SK-N-SH (cell line): ENCODE measurements at regions of chr17 and their contacts with region 1.

Region 1: DNA sequence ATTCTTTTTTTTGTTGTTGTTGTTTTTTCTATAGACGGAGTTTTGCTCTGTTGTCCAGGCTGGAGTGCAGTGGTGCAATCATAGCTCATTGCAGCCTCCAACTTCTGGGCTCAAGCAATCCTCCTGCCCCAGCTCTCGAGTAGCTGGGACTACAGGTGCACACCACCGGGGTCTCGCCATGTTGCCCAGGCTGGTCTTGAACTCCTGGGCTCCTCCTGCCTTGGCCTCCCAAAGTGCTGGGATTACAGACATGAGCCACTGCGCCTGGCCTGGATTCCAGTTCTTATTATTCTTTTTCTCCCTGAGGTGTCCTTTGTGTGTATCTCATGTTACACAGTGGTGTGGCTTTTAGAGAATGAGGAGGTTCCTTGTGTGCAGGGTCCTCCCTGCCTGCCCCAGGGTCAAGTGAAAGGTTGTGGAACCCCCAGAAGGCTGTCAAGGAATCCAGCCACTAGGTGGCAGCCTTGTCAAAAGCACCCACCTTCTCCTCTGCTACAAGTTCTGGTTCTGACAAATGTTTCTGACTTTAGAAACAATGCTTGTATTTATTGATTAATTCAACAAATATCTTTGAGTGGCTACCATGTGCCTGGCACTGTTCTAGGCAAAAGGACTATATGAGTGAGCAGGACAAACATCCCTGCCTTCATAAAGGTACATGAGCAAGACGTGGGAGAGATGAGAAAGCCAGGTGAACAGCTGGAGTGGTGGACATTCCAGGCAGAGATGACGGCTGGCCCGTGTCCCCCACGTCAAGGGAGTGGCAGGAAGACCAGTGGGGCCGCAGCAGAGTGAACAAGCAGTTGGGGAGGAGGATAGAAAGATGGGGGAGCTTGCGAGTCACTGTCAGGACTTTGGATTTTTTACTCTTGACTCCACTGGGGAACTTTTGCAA is 112.4 kb downstream of the SPECC1 start:
- DNase-seq: peak; percentile 76
- H3K4me3 ChIP-seq: no peak overlapping the region; a peak in 1 of 4 replicates
- H3K27ac ChIP-seq: no peak overlapping the region; a peak in 1 of 4 replicates
- H3K4me1 ChIP-seq: peaks cover 0 to 5% of the 10 kb centered on the region in 2 experiments; a peak in 1 of 4 replicates
- H3K27me3 ChIP-seq: no peaks in the 10 kb centered on the region
- CTCF ChIP-seq: peak; percentile 97
- EP300 ChIP-seq: no peak
- RAD21 ChIP-seq: peak; percentile 95

Region 2: DNA sequence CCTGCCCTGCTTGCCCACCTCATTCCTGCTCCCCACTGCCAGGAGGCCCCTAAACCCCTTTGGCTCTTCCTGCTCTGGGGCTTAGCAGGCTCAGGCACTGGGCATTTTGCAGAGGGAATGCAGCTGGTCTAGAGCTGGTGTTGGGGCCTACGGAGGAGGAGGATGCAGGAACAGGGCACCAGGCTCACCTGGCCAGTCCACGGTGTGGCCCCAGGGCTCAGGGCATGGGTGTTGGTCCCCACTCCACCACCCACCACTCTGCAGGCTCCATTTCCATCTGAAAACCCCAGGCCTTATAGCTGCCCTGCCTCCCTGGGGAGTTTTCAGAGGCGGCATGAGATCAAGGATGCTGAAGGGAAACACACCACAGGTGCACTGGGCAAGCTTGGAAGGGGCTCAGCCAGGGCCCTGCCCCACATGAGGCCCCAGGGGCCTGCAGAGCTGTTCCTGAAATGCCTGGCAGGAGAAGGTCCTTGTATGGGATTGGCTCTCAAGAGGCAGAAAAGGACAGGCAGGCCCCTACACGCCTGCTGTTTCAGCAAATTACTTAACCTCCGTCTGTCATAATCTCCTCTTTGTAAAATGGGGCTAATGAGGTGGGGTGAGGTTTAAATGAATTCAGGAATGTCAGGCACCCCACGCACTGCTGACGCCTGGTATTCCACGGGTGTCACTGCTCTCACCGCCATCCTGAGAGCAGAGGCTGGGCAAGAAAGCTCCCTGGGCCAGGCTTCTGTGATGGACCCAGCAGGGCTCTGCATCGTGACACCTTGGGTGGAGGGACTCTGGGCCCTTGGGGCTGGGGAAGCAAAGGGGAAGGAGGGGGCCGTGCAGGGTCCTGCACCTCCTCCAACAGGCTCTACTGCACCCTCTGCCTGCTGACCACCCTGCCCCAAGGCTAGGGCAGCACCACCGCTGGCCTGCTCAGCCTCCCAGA is 414.5 kb before region 1 on chr17:
- CTCF ChIA-PET with region 1: no interaction called
- POLR2A ChIA-PET with region 1: no interaction called
- DNase-seq: no peak
- H3K4me3 ChIP-seq: no peak overlapping the region
- H3K27ac ChIP-seq: no peak overlapping the region
- H3K4me1 ChIP-seq: peaks cover 8 to 16% of the 10 kb centered on the region in 2 experiments; a peak in 1 of 4 replicates
- H3K27me3 ChIP-seq: no peaks in the 10 kb centered on the region
- CTCF ChIP-seq: no peak
- EP300 ChIP-seq: no peak
- RAD21 ChIP-seq: no peak

Region 3: DNA sequence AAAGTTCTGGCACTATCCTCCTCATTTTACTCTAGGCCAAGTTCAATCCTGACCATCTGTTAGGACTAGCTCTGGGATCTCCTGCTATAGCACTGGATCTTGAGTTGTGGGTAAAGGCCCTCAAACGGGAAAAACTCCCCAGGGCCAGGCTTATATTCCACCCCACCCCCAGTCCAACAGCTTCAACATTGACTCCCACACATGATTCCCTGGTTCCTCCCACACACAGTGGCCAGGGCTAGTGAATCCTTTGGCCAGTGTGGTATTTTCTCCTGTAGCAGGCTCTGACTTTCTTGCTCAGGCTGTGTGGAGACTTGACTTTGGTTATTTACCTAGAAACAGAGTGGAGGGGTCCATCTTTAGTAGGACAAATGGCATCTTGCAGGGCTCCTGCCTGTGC is 133.7 kb before region 1 on chr17:
- CTCF ChIA-PET with region 1: interaction called, 67 read pairs
- POLR2A ChIA-PET with region 1: no interaction called
- DNase-seq: no peak
- H3K4me3 ChIP-seq: no peak overlapping the region
- H3K27ac ChIP-seq: no peak overlapping the region
- H3K4me1 ChIP-seq: no peaks in the 10 kb centered on the region
- H3K27me3 ChIP-seq: no peaks in the 10 kb centered on the region
- CTCF ChIP-seq: no peak
- EP300 ChIP-seq: no peak
- RAD21 ChIP-seq: no peak

Region 4: GRCh38 chr17:19992803-19993713 is 128.5 kb before region 1 on chr17:
- CTCF ChIA-PET with region 1: interaction called, 67 read pairs
- POLR2A ChIA-PET with region 1: no interaction called
- DNase-seq: peak; percentile 80
- H3K4me3 ChIP-seq: peak overlapping the region; percentile 9 to 40; a peak in 1 of 4 replicates
- H3K27ac ChIP-seq: no peak overlapping the region
- H3K4me1 ChIP-seq: no peaks in the 10 kb centered on the region
- H3K27me3 ChIP-seq: no peaks in the 10 kb centered on the region
- CTCF ChIP-seq: peak; percentile 72
- EP300 ChIP-seq: no peak
- RAD21 ChIP-seq: peak; percentile 93

Region 5: GRCh38 chr17:20141198-20141972 is 19.8 kb after region 1 on chr17:
- CTCF ChIA-PET with region 1: interaction called, 10 read pairs
- POLR2A ChIA-PET with region 1: no interaction called
- DNase-seq: no peak
- H3K4me3 ChIP-seq: no peak overlapping the region
- H3K27ac ChIP-seq: no peak overlapping the region
- H3K4me1 ChIP-seq: no peaks in the 10 kb centered on the region; a peak in 1 of 4 replicates
- H3K27me3 ChIP-seq: no peaks in the 10 kb centered on the region
- CTCF ChIP-seq: no peak
- EP300 ChIP-seq: no peak
- RAD21 ChIP-seq: no peak

Region 6: DNA sequence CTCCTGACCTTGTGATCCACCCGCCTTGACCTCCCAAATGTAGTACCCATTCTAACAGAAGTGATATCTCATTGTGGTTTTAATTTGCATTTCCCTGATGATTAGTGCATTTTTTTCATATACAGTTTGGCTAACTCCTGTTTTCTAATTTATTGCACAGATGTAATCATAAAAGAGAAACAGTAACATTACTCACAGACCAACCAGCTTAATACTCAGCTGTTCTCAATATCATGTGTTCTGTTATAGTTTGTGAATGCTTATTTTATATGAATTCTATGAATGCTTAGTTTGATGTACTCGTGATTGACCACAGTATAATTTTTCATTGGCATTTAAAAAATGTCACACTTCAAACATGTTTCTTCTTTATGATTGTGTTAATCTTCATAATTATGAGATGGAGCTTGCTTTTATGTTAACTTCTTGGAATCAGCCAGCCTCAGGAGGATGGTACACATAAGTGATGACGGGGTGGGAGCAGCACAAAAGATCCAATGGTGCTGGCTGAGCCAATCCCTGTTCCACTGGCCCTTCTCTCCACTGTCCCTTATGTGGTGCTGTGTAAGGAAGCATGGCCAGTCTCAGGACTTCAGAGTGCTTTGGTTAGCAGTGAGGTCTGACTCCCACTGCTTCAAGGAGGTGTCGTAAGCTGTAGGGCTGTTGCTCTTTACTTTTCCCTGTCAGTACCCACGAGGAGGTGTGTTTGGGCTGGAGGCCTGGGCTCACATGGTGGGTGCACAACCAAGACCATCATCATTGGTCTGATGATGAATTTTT is 78.6 kb after region 1 on chr17:
- CTCF ChIA-PET with region 1: no interaction called
- POLR2A ChIA-PET with region 1: no interaction called
- DNase-seq: no peak
- H3K4me3 ChIP-seq: no peak overlapping the region
- H3K27ac ChIP-seq: no peak overlapping the region
- H3K4me1 ChIP-seq: no peaks in the 10 kb centered on the region
- H3K27me3 ChIP-seq: no peaks in the 10 kb centered on the region
- CTCF ChIP-seq: no peak
- EP300 ChIP-seq: no peak
- RAD21 ChIP-seq: no peak

Region 7: DNA sequence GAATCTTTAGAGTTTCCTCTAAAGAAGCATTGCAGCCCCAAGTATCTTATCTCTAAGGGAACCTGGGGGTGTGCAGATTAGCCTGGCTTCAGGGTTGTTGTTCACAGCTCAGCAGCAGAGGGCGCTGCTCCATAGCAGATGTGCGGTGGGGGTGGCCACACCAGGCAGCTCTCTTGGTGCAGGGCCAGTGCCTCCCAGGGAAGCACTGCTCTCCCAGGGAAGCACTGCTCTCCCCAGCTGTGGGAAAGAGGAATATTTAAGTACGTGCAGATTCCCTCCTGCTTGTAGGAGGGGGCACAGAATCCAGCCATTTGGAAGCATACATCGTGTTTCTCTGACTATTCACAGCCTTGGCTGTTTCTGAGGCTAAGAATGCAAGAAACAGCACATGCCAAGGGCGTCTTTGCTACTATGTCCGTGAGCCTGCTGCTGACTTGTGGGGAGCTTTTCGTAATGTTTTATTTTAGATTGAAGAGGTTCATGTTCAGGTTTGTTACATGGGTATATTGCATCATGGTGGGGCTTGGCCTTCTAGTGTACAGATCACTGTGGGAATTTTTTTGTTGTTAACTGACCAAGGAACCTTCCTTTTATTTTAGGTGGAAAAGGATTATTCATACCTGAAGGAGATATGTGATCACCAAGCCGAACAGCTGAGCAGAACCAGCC is 105.3 kb after region 1 on chr17:
- CTCF ChIA-PET with region 1: interaction called, 59 read pairs
- POLR2A ChIA-PET with region 1: no interaction called
- DNase-seq: peak; percentile 85
- H3K4me3 ChIP-seq: no peak overlapping the region; a peak in 1 of 4 replicates
- H3K27ac ChIP-seq: no peak overlapping the region
- H3K4me1 ChIP-seq: peaks cover 0 to 3% of the 10 kb centered on the region in 2 experiments; a peak in 1 of 4 replicates
- H3K27me3 ChIP-seq: no peaks in the 10 kb centered on the region
- CTCF ChIP-seq: peak; percentile 88
- EP300 ChIP-seq: no peak
- RAD21 ChIP-seq: peak; percentile 98

Region 8: DNA sequence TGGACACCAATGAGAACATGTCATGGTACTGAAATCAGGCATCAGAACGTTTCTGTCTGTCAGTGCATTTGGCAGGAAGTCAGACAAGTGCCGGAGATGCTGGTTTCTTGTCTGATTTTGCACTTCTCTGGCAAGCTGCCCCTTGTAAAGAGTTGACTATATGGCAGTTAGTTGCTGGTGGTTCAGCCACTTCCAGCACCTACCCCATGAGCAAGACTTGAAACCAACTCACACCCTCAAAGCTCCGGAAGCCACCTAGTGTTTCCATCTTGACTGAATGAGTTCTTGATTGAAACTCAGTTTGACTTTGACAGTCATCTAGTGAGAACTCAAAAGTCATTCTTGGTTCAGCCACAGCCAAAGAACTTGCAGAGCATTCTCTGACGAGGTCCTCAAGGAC is 112.7 kb after region 1 on chr17:
- CTCF ChIA-PET with region 1: interaction called, 14 read pairs
- POLR2A ChIA-PET with region 1: no interaction called
- DNase-seq: no peak
- H3K4me3 ChIP-seq: no peak overlapping the region
- H3K27ac ChIP-seq: no peak overlapping the region
- H3K4me1 ChIP-seq: peaks cover 0 to 6% of the 10 kb centered on the region in 2 experiments; a peak in 1 of 4 replicates
- H3K27me3 ChIP-seq: no peaks in the 10 kb centered on the region
- CTCF ChIP-seq: no peak
- EP300 ChIP-seq: no peak
- RAD21 ChIP-seq: no peak